ENCODE measurements at regions of chr2 and their contacts with region 1.

Region 1: GRCh38 chr2:164737612-164738081 is 104.0 kb downstream of the COBLL1 start:
- DNase-seq: peak; percentile 69 to 78 (median 76)
- ATAC-seq: peak; percentile 82
- H3K4me3 ChIP-seq: no peak overlapping the region
- H3K27ac ChIP-seq: peak overlapping the region in 3 of 4 donors; percentile 20 to 56 (median 20)
- H3K4me1 ChIP-seq: peaks cover 62% of the 10 kb centered on the region
- H3K27me3 ChIP-seq: no peaks in the 10 kb centered on the region
- CTCF ChIP-seq: peak; percentile 56 to 91 (median 84)
- POLR2A ChIP-seq: no peak

Region 2: DNA sequence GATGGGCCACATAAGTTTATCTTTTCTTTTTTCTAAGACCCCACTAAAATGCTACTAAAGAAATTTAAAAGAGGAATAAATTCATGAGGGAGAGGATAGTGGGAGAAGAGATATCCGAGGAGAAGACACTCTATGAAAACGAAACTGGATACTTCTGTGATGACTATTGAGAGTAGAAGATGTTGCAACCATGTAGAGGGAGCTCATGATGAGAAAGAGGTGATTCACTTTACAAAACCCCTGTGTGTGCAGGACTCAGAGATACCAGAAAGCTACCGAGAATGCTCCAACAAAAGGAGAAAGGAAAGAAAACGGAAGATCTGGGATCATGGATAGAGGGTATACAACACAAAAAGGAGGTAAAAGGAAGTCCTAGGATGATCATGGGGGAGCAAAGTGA is 182.8 kb after region 1 on chr2:
- intact Hi-C with region 1: loop called (anchors 10 kb)
- DNase-seq: no peak
- ATAC-seq: no peak
- H3K4me3 ChIP-seq: no peak overlapping the region
- H3K27ac ChIP-seq: no peak overlapping the region
- H3K4me1 ChIP-seq: peaks cover 11% of the 10 kb centered on the region
- H3K27me3 ChIP-seq: no peaks in the 10 kb centered on the region
- CTCF ChIP-seq: no peak
- POLR2A ChIP-seq: no peak